Sciatic nerve (tissue), 2 donors: ENCODE measurements at regions of chr19 and their contacts with region 1.

Region 1: GRCh38 chr19:49544154-49544553 is 16.4 kb downstream of the RCN3 start:
- DNase-seq: no peak
- ATAC-seq: no peak

Region 2: DNA sequence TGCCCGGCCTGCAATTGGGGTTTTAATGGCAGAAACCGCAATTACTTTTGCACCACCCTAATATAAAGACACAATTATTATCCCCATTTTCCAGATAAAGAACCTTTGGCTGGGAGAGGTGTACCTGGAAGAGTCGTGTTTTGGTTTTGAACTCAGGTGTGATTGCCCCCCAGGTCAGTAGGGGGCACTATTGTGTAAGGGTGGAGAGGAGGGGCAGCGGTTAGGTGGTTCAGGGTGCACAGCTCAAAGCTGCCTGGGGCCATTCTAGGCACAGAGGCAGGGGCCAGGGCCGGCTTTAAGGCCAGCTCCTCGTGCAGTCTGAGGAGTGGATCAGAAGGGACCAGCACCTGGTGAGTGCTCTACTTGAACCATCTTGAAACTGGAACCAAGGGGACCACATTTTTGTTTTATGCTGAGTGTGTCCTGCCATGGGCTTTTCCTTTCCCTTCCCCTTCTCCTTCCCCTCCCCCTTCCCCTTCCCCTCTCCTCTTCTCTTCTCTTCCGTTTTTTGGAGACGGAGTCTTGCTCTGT is 37.5 kb before region 1 on chr19:
- intact Hi-C with region 1: loop called (anchors 5 kb)
- DNase-seq: no peak
- ATAC-seq: peak; percentile 46

Region 3: GRCh38 chr19:49528211-49528771 is 15.9 kb before region 1 on chr19:
- intact Hi-C with region 1: no loop called
- DNase-seq: peak; percentile 80
- ATAC-seq: peak; percentile 38